OCI-LY7 (cell line): ENCODE measurements at regions of chr19 and their contacts with region 1.

Region 1: GRCh38 chr19:1131738-1132551 is 28.2 kb downstream of the GPX4 start:
- DNase-seq: peak; percentile 89
- H3K4me3 ChIP-seq: peak overlapping the region; percentile 71
- H3K27ac ChIP-seq: peak overlapping the region; percentile 85
- H3K4me1 ChIP-seq: peaks cover 34% of the 10 kb centered on the region
- CTCF ChIP-seq: no peak

Region 2: DNA sequence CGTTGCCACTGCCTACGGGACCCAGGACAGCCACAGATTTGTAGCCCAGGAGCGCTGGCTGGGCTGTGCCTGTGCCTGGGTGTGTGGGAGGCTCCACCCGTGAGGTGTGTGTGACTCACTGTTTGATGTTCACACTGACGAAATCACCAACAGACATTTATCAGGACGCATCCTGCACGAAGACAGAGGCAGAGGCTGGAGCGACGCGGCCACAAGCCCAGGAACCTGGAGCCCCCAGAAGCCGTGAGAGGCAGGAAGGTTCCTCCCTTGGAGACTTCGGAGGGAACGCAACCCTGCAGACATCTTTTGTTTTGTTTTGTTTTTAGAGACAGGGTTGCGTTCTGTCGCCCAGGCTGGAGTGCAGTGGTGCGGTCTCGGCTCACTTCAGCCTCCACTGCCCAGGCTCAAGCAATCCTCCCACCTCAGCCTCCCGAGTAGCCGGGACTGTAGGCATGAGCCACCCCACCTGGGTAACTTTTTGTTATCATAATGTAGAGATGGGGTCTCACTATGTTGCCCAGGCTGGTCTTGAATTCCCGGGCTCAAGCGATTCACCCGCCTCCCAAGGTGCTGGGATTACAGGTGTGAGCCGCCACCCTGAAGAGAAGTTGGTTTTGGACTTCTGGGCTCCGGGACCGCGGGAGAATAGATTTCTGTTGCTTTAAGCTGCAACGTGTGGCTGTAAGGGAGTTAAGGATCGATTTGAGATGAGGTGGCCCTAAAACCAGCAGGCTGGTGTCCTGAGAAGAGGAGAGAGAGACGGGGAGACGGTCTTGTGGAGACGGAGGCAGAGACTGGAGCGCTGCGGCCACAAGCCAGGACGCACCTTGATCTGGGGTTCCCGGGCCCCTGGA is 172.8 kb before region 1 on chr19:
- CTCF ChIA-PET with region 1: no interaction called
- POLR2A ChIA-PET with region 1: no interaction called
- intact Hi-C with region 1: no loop called
- DNase-seq: no peak
- H3K4me3 ChIP-seq: no peak overlapping the region
- H3K27ac ChIP-seq: no peak overlapping the region
- H3K4me1 ChIP-seq: no peaks in the 10 kb centered on the region
- CTCF ChIP-seq: no peak

Region 3: GRCh38 chr19:1173845-1174809 is 42.2 kb after region 1 on chr19 and contains the start of gene SBNO2:
- CTCF ChIA-PET with region 1: no interaction called
- POLR2A ChIA-PET with region 1: no interaction called
- intact Hi-C with region 1: loop called (anchors 5 kb)
- DNase-seq: peak; percentile 91
- H3K4me3 ChIP-seq: peak within 1 kb of the TSS; percentile 100
- H3K27ac ChIP-seq: peak within 1 kb of the TSS; percentile 34
- H3K4me1 ChIP-seq: peaks cover 15% of the 10 kb centered on the region
- CTCF ChIP-seq: no peak
- total RNA-seq, gene SBNO2: 17.6 and 26.6 TPM in 2 replicates

Region 4: GRCh38 chr19:1189419-1189818 is 57.5 kb after region 1 on chr19:
- CTCF ChIA-PET with region 1: no interaction called
- POLR2A ChIA-PET with region 1: no interaction called
- intact Hi-C with region 1: no loop called
- DNase-seq: no peak
- H3K4me3 ChIP-seq: no peak overlapping the region
- H3K27ac ChIP-seq: no peak overlapping the region
- H3K4me1 ChIP-seq: peaks cover 5% of the 10 kb centered on the region
- CTCF ChIP-seq: no peak

Region 5: GRCh38 chr19:1241417-1242095 is 109.6 kb after region 1 on chr19 and contains the start of gene ATP5F1D:
- CTCF ChIA-PET with region 1: no interaction called
- POLR2A ChIA-PET with region 1: no interaction called
- intact Hi-C with region 1: loop called (anchors 2 kb)
- DNase-seq: peak; percentile 96
- H3K4me3 ChIP-seq: peak within 1 kb of the TSS; percentile 89
- H3K27ac ChIP-seq: peak within 1 kb of the TSS; percentile 50
- H3K4me1 ChIP-seq: peaks cover 48% of the 10 kb centered on the region
- CTCF ChIP-seq: no peak
- total RNA-seq, gene ATP5F1D: 51.8 and 82.1 TPM in 2 replicates